ENCODE measurements at regions of chr11 and their contacts with region 1.

Region 1: GRCh38 chr11:64185816-64186498 is at the start of gene STIP1:
- DNase-seq: peak; percentile 99 to 100 (median 99)
- H3K4me3 ChIP-seq: peak within 1 kb of the TSS; percentile 64 to 71
- H3K4me3 Mint-ChIP-seq: peak within 1 kb of the TSS; percentile 95 to 99 (median 97)
- H3K27ac ChIP-seq: peak within 1 kb of the TSS; percentile 79
- H3K27ac Mint-ChIP-seq: peak within 1 kb of the TSS; percentile 91 to 98 (median 97)
- H3K4me1 ChIP-seq: peaks cover 29% of the 10 kb centered on the region
- H3K4me1 Mint-ChIP-seq: peaks cover 11 to 52% (median 33%) of the 10 kb centered on the region in 4 donors
- H3K27me3 ChIP-seq: no peaks in the 10 kb centered on the region
- H3K27me3 Mint-ChIP-seq: no peaks in the 10 kb centered on the region
- total RNA-seq, gene STIP1: 97.4 to 106 TPM

Region 2: DNA sequence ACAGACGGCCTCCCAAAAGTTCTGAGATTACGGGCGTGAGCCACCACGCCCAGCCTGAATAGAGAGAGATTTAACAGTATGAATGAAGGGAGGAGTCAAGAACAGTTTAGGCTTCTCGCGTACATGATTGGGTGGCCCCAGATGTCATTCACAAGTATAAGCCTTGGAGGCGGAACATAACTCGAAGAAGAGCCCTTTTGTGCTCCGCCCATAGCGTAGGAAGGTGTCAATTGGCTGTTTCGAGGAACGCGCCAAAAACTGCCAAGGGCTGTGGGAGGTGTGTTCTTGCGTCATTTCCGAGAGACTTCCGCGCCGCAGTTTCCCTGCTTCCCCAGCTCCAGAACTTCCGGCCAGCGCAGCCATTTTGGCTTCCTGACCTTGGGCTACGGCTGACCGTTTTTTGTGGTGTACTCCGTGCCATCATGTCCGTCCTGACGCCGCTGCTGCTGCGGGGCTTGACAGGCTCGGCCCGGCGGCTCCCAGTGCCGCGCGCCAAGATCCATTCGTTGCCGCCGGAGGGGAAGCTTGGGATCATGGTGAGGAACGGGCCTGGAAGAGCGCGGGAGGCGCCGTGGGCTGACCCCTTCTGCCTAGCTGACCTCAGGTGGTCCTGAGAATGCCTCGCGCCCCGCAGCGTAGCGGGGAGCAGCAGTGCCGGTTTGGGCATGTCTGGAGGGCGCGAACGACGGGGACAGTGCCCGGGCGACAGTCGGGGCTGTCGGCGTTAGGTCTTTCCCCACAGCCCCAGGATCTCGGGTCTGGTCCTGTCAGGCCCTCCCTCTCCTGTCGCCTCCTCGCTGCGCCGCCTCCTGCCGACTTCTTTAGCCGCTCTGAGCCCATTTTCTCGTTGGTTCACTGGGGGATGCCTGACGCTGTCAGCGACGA is 211.5 kb before region 1 on chr11 and contains the start of gene COX8A:
- CTCF ChIA-PET with region 1: no interaction called
- POLR2A ChIA-PET with region 1: interaction called, 10 read pairs
- intact Hi-C with region 1: no loop called
- DNase-seq: peak; percentile 94 to 98 (median 96)
- H3K4me3 ChIP-seq: peak within 1 kb of the TSS; percentile 90 to 100
- H3K4me3 Mint-ChIP-seq: peak within 1 kb of the TSS; percentile 96 to 100 (median 100)
- H3K27ac ChIP-seq: peak within 1 kb of the TSS; percentile 95
- H3K27ac Mint-ChIP-seq: peak within 1 kb of the TSS; percentile 99 to 100 (median 99)
- H3K4me1 ChIP-seq: peaks cover 20% of the 10 kb centered on the region
- H3K4me1 Mint-ChIP-seq: peaks cover 17 to 40% (median 31%) of the 10 kb centered on the region in 4 donors
- H3K27me3 ChIP-seq: no peaks in the 10 kb centered on the region
- H3K27me3 Mint-ChIP-seq: peaks cover 2% of the 10 kb centered on the region in 2 donors
- total RNA-seq, gene COX8A: 113 to 130 TPM

Region 3: DNA sequence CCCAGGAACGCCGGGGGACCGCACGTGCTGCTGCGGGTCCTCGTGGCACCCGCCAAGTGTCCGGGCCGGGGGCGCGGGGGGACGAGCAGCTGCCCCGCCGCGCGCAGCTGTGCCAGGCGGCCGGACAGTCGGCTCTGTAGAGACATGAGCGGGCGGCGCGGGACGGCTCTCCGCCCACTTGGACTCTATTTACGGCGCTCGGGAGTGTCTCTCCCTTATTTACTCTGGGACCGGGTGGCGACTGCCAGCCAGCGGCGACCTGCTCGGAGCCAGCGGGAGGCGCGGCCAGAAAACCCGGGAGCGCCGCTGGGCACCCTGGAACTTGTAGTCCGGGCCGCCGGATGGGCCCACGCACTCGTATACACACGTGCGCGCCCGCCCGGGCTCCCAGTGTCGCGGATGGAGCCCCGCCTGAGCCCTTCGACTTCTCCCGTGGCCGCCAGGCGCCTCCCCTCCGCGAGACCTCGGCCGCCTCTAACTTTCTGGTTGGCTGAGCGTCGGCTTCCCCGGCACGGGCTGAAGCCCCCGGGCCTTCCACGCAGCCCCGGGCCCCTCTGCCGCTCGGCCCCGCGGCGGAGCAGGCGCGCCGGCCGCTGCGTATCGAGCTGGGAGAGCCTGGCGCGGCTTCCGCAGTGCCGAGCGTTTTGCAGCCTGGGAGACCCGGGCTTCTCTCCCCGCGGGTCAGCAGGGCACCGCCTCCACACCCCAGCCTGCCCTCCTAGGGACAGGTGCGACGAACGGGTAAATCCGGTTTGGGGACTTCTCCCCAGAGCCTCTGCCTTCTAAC is 19.9 kb before region 1 on chr11 and contains the start of gene MACROD1:
- CTCF ChIA-PET with region 1: no interaction called
- POLR2A ChIA-PET with region 1: interaction called, 25 read pairs
- intact Hi-C with region 1: loop called (anchors 2 kb)
- DNase-seq: peak; percentile 63 to 76 (median 69)
- H3K4me3 ChIP-seq: peak within 1 kb of the TSS; percentile 47 to 62
- H3K4me3 Mint-ChIP-seq: peak within 1 kb of the TSS; percentile 84 to 93 (median 91)
- H3K27ac ChIP-seq: peak within 1 kb of the TSS; percentile 55
- H3K27ac Mint-ChIP-seq: peak within 1 kb of the TSS in 6 of 7 donors; percentile 74 to 89 (median 82)
- H3K4me1 ChIP-seq: peaks cover 11% of the 10 kb centered on the region
- H3K4me1 Mint-ChIP-seq: peaks cover 4 to 15% (median 6%) of the 10 kb centered on the region in 4 donors
- H3K27me3 ChIP-seq: no peaks in the 10 kb centered on the region
- H3K27me3 Mint-ChIP-seq: no peaks in the 10 kb centered on the region
- total RNA-seq, gene MACROD1: 8.1 to 8.7 TPM

Region 4: GRCh38 chr11:64204464-64204989 is 18.6 kb after region 1 on chr11:
- CTCF ChIA-PET with region 1: interaction called, 106 read pairs
- POLR2A ChIA-PET with region 1: interaction called, 128 read pairs
- intact Hi-C with region 1: loop called (anchors 1 kb)
- DNase-seq: peak; percentile 85 to 90 (median 86)
- H3K4me3 ChIP-seq: no peak overlapping the region
- H3K4me3 Mint-ChIP-seq: peak overlapping the region; percentile 62 to 89 (median 82)
- H3K27ac ChIP-seq: no peak overlapping the region
- H3K27ac Mint-ChIP-seq: peak overlapping the region; percentile 85 to 97 (median 94)
- H3K4me1 ChIP-seq: peaks cover 44% of the 10 kb centered on the region
- H3K4me1 Mint-ChIP-seq: peaks cover 16 to 64% (median 39%) of the 10 kb centered on the region in 4 donors
- H3K27me3 ChIP-seq: no peaks in the 10 kb centered on the region
- H3K27me3 Mint-ChIP-seq: no peaks in the 10 kb centered on the region

Region 5: DNA sequence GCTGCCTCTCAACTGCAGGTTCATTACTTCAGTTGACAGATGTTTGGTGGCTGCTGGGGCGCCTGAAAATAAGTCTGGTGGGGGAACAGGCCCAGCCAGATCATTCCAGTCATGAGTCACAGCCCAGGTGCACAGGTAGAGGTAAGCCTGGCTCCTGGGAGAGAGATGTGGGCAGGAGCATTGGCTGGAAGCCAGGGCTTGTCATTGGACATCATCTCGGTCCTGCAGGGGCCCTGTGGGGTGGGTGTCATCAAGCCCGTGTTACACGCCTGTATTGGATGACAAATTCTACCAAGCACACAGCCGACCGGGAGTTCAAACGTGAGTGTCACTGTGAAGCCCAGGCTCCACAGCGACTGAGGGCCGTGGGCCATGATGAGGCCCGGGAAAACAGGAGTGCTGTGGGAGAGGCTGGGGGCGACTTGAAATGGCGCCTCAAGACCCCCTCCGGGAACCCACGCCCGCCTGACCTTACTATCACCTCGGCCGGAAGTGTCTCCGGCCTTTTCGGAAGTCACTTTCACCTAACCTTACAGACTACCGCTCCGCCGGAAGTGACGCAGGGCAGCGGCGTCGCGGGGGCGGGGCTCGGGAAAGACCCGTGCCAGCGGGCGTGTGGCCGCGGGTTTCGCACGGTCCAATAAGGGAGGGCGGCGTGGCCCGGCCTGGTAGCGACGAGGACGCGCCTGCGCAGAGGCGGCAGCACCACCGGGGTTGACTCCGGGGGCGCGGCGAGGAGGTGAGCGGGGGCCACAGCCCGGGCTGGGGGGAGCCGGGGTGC is 54.6 kb after region 1 on chr11 and contains the start of gene FKBP2:
- CTCF ChIA-PET with region 1: no interaction called
- POLR2A ChIA-PET with region 1: interaction called, 14 read pairs
- intact Hi-C with region 1: loop called (anchors 1 kb)
- DNase-seq: peak; percentile 97 to 99 (median 99)
- H3K4me3 ChIP-seq: peak within 1 kb of the TSS; percentile 67 to 73
- H3K4me3 Mint-ChIP-seq: peak within 1 kb of the TSS; percentile 87 to 97 (median 88)
- H3K27ac ChIP-seq: peak within 1 kb of the TSS; percentile 99
- H3K27ac Mint-ChIP-seq: peak within 1 kb of the TSS; percentile 99 to 100 (median 100)
- H3K4me1 ChIP-seq: peaks cover 38% of the 10 kb centered on the region
- H3K4me1 Mint-ChIP-seq: peaks cover 14 to 52% (median 29%) of the 10 kb centered on the region in 4 donors
- H3K27me3 ChIP-seq: no peaks in the 10 kb centered on the region
- H3K27me3 Mint-ChIP-seq: no peaks in the 10 kb centered on the region
- total RNA-seq, gene FKBP2: 41.4 to 46.4 TPM

Region 6: DNA sequence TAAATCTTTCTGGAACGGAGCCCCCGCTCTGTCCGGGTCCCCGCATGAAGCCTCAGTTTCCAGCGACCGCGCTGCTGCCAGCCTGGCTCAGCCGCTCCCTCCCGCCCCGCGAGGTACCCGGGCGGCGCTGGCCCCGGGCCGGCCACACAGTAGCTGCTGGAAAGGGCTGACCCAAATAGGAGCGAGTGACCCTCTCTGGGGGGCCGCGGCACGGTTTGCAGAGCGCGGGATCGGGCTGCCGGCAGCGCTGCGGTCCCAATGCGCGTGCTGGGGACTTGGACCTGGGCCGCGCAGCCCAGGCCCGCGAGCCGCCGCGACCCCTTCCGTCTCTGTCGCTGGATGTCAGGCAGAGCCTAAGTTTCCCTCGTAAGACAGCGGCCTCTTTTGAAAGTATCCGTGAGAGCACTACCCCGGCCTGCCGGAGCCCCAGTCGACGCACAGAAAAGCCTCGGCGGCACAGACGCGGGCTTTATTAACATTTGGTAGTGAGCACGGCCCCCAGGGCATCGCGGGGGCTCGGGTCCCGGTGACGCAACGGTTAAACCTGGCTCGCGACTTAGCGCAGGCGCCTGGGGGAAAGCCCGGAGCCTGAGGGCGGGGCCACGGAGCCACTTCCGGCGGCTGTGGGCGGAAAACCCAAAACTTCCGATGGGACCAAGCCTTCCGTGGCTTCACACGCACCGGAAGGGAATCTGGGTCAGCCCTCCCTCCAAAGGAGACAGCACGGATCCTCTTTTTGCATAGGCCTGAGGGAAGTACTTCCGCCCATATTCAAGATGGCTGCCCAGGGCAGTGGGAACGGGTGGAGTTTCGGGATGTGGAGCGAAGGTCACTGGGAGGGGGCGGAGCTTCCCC is 83.7 kb after region 1 on chr11:
- CTCF ChIA-PET with region 1: interaction called, 4 read pairs
- POLR2A ChIA-PET with region 1: interaction called, 37 read pairs
- intact Hi-C with region 1: loop called (anchors 1 kb)
- DNase-seq: peak; percentile 98
- H3K4me3 ChIP-seq: peak overlapping the region; percentile 93 to 98
- H3K4me3 Mint-ChIP-seq: peak overlapping the region; percentile 93 to 100 (median 96)
- H3K27ac ChIP-seq: peak overlapping the region; percentile 93
- H3K27ac Mint-ChIP-seq: peak overlapping the region; percentile 98 to 100 (median 99)
- H3K4me1 ChIP-seq: peaks cover 20% of the 10 kb centered on the region
- H3K4me1 Mint-ChIP-seq: peaks cover 9 to 36% (median 19%) of the 10 kb centered on the region in 4 donors
- H3K27me3 ChIP-seq: no peaks in the 10 kb centered on the region
- H3K27me3 Mint-ChIP-seq: peaks cover 0 to 4% of the 10 kb centered on the region in 2 donors

Region 7: DNA sequence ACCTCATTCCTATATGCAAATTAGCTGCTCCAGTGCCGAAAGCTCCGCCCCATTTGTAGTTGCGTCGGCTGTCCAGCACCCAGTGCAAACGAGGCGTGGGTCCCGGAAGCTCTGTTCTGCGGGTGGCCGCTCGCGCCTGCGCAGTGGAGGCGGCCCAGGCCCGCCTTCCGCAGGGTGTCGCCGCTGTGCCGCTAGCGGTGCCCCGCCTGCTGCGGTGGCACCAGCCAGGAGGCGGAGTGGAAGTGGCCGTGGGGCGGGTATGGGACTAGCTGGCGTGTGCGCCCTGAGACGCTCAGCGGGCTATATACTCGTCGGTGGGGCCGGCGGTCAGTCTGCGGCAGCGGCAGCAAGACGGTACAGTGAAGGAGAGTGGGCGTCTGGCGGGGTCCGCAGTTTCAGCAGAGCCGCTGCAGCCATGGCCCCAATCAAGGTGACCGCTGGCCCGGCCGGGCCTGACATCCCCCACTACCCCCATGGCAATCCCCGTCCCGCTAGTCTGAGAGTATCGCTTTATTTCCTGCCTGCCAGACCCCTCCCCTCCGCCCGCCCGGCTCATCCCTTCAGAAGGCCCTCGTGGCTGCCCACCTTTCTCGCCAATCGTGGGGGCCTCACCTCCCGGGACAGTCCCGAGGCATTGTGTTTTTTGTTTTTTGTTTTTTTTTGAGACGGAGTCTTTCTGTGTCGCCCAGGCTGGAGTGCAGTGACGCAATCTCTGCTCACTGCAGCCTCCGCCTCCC is 132.2 kb after region 1 on chr11 and contains the start of gene PRDX5:
- CTCF ChIA-PET with region 1: interaction called, 5 read pairs
- POLR2A ChIA-PET with region 1: interaction called, 21 read pairs
- intact Hi-C with region 1: no loop called
- DNase-seq: peak; percentile 96 to 98 (median 97)
- H3K4me3 ChIP-seq: peak within 1 kb of the TSS; percentile 68 to 72
- H3K4me3 Mint-ChIP-seq: peak within 1 kb of the TSS; percentile 95 to 99 (median 96)
- H3K27ac ChIP-seq: peak within 1 kb of the TSS; percentile 96
- H3K27ac Mint-ChIP-seq: peak within 1 kb of the TSS; percentile 97 to 100 (median 100)
- H3K4me1 ChIP-seq: peaks cover 26% of the 10 kb centered on the region
- H3K4me1 Mint-ChIP-seq: peaks cover 17 to 44% (median 29%) of the 10 kb centered on the region in 4 donors
- H3K27me3 ChIP-seq: no peaks in the 10 kb centered on the region
- H3K27me3 Mint-ChIP-seq: no peaks in the 10 kb centered on the region
- total RNA-seq, gene PRDX5: 57.6 to 58.7 TPM

Measured in CD4-positive, alpha-beta memory T cell (primary cell).